ENCODE measurements at regions of chr6 and their contacts with region 1.

Region 1: DNA sequence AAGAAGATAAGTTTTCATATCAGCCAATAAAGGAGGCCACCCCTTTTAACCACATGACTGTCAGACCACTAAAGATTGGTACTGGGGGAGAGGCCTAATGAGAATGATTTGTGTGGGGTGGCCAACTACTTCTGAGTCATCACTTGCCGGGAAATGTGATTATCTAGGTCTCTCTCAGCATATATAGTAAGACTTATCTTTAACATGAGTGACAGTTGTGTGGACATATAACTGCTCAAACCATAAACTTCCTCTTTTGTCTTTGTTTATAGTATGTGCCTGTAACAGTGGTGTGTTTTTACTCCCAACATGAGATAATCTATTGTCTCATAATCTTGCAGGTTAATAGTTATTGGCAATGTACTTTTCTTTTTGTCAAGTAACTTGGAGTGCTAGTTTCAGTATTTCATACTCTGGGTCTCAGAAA is 312.4 kb downstream of the CDKAL1 start:
- DNase-seq: no peak
- H3K4me3 Mint-ChIP-seq: no peak overlapping the region
- H3K27ac Mint-ChIP-seq: no peak overlapping the region
- H3K4me1 Mint-ChIP-seq: peaks cover 16% of the 10 kb centered on the region
- H3K27me3 Mint-ChIP-seq: no peaks in the 10 kb centered on the region

Region 2: GRCh38 chr6:20688710-20689500 is 157.7 kb before region 1 on chr6:
- intact Hi-C with region 1: loop called (anchors 10 kb)
- DNase-seq: no peak
- H3K4me3 Mint-ChIP-seq: peak overlapping the region; percentile 39
- H3K27ac Mint-ChIP-seq: peak overlapping the region; percentile 31
- H3K4me1 Mint-ChIP-seq: peaks cover 20% of the 10 kb centered on the region
- H3K27me3 Mint-ChIP-seq: no peaks in the 10 kb centered on the region

Measured in activated CD4-positive, alpha-beta T cell treated with anti-CD3 and anti-CD28 coated beads, Interleukin-2, amount 10 ng/mL, durations not matched to agents 24 days and 14 days (primary cell).